Endothelial cell of umbilical vein (primary cell): ENCODE measurements at regions of chr3 and their contacts with region 1.

Region 1: DNA sequence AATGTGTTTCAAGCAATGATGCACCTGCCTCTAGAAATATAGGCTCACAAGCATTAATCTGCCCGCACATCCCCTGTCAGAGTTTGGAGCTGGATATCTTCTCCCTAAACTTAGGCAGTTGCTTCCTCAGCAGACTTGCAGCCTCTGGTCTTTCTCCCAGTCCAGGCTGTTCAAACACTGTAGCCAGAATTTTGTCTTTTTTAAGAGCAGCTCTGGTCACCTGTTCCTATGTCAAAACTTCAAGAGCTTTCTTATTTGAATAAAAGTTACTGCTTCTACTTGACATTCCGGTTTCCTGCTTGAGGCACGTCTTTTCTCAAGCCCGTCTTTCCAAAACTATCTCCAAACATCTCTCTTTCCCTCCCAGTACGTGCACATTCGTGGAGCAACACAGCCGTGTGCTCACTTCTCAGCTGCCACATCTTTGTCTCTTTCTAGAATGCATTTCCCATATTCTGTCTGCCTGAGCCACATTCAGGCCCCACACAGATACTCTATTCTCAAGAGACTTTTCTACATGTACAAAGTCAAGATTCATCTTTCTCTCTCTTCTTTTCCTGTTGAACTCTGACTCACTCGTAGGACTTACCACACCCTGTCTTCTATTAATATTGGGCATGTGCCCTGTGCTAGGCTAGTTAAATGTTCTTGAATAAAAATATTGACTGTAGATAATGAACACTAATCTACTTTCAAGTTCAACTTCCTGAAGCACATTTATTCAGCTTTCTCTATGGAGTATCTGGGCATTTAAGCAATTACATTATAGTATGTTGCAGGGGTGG is 307.7 kb upstream of the SOX2 start:
- DNase-seq: no peak
- H3K4me3 ChIP-seq: no peak overlapping the region
- H3K27ac ChIP-seq: no peak overlapping the region
- H3K4me1 ChIP-seq: no peaks in the 10 kb centered on the region
- H3K27me3 ChIP-seq: no peaks in the 10 kb centered on the region
- CTCF ChIP-seq: no peak
- POLR2A ChIP-seq: no peak

Region 2: DNA sequence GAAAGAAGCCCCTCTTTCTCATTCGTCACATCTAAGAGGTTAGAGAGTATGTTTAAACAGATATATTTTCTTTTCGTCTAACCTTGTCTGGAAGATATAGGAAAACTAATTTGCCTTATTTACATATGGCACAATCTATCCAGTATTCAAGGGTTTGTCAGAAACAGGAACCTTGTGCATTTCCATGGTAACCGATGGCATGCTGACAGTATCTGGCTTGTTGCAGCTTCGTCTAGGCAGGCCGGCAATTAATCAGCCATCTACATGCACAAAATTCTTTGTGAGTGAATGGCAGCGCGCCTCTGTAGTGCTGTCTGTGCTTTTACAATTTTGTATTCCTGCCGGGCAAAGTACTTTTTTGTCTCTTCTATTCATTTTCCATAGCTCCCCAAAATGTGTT is 13.7 kb after region 1 on chr3:
- CTCF ChIA-PET with region 1: interaction called, 5 read pairs
- POLR2A ChIA-PET with region 1: no interaction called
- dilution Hi-C with region 1: no loop called
- intact Hi-C with region 1: loop called (anchors 1 kb)
- DNase-seq: no peak
- H3K4me3 ChIP-seq: no peak overlapping the region
- H3K27ac ChIP-seq: no peak overlapping the region
- H3K4me1 ChIP-seq: no peaks in the 10 kb centered on the region
- H3K27me3 ChIP-seq: no peaks in the 10 kb centered on the region
- CTCF ChIP-seq: no peak
- POLR2A ChIP-seq: no peak

Region 3: GRCh38 chr3:181578743-181579142 is 174.7 kb after region 1 on chr3:
- CTCF ChIA-PET with region 1: no interaction called
- POLR2A ChIA-PET with region 1: no interaction called
- dilution Hi-C with region 1: no loop called
- intact Hi-C with region 1: no loop called
- DNase-seq: no peak
- H3K4me3 ChIP-seq: no peak overlapping the region
- H3K27ac ChIP-seq: no peak overlapping the region
- H3K4me1 ChIP-seq: no peaks in the 10 kb centered on the region
- H3K27me3 ChIP-seq: no peaks in the 10 kb centered on the region
- CTCF ChIP-seq: no peak
- POLR2A ChIP-seq: no peak